ENCODE measurements at regions of chr1 and their contacts with region 1.

Region 1: GRCh38 chr1:93533677-93534076 is 85.8 kb downstream of the FNBP1L start:
- DNase-seq: no peak
- H3K4me3 Mint-ChIP-seq: no peak overlapping the region
- H3K27ac Mint-ChIP-seq: no peak overlapping the region
- H3K4me1 Mint-ChIP-seq: no peaks in the 10 kb centered on the region
- H3K27me3 Mint-ChIP-seq: peaks cover 20% of the 10 kb centered on the region

Region 2: GRCh38 chr1:93501829-93502369 is 31.8 kb before region 1 on chr1:
- intact Hi-C with region 1: loop called (anchors 2 kb)
- DNase-seq: no peak
- H3K4me3 Mint-ChIP-seq: no peak overlapping the region
- H3K27ac Mint-ChIP-seq: no peak overlapping the region
- H3K4me1 Mint-ChIP-seq: no peaks in the 10 kb centered on the region
- H3K27me3 Mint-ChIP-seq: no peaks in the 10 kb centered on the region

Measured in activated T-helper 1 cell treated with anti-CD3 and anti-CD28 coated beads, Interleukin-12 subunit alpha, Interleukin-12 subunit beta, Interleukin-2, Interleukin-4 antibody, amounts not matched to agents 30 ng/mL and 10 ng/mL and 1 ng/mL, durations not matched to agents 14 hours and 24 hours and 36 hours (primary cell).